Activated T-helper 1 cell treated with anti-CD3 and anti-CD28 coated beads, Interleukin-12 subunit alpha, Interleukin-12 subunit beta, Interleukin-2, Interleukin-4 antibody, amounts not matched to agents 30 ng/mL and 10 ng/mL and 1 ng/mL, durations not matched to agents 14 hours and 24 hours and 36 hours (primary cell): ENCODE measurements at regions of chr5 and their contacts with region 1.

Region 1: GRCh38 chr5:73298772-73299630 is 126.0 kb downstream of the TMEM174 start:
- DNase-seq: no peak
- H3K4me3 Mint-ChIP-seq: no peak overlapping the region
- H3K27ac Mint-ChIP-seq: peak overlapping the region; percentile 42
- H3K4me1 Mint-ChIP-seq: no peaks in the 10 kb centered on the region
- H3K27me3 Mint-ChIP-seq: peaks cover 81% of the 10 kb centered on the region

Region 2: DNA sequence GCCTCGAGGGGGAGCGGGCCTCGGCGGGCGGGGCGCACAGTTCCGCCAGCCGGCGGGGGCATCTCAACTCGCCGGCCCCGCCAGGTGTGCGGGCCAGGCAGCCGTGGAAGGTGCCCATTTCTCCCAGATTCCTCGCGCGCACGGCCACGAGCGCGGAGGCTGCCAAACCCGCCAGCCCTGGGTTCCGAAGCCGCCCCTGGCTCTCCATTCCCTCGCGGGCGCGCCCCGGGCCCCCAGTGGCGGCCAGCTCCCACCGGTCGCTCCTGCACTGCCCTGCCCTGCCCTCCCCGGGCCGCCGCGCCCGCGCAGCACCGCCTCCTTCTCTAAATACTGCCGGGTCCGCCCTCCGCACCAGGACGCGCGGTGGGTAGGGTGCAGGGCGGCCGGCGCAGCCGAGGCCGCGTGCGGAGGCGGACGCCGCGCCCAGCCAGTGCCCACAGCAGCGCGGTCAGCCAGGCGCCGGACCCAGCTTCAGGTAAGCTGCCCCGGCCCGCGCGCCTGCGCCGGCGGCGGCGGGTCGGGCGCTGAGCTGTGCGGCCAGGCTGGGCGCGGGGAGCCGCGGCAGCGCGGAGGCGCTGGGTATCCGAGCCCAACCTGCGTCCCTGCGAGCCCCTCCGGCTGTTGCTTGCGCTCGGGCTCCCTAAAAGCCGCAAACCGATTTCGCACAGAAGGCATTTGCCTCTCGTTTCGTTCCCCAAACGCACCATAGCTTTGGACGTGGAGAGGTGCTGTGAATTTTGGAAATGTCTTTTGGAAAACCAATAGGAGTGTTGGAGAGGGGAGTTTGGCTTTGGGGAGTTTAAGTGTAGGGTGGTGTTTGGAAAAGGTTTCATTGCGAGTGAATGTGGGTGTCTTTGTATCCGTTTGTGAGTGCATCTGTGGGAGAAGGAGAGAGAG is 178.5 kb before region 1 on chr5 and contains the start of gene TMEM171:
- intact Hi-C with region 1: loop called (anchors 5 kb)
- DNase-seq: no peak
- H3K4me3 Mint-ChIP-seq: no peak within 1 kb of the TSS
- H3K27ac Mint-ChIP-seq: no peak within 1 kb of the TSS
- H3K4me1 Mint-ChIP-seq: no peaks in the 10 kb centered on the region
- H3K27me3 Mint-ChIP-seq: peaks cover 61% of the 10 kb centered on the region
- total RNA-seq, gene TMEM171: not detected in 2 replicates

Region 3: DNA sequence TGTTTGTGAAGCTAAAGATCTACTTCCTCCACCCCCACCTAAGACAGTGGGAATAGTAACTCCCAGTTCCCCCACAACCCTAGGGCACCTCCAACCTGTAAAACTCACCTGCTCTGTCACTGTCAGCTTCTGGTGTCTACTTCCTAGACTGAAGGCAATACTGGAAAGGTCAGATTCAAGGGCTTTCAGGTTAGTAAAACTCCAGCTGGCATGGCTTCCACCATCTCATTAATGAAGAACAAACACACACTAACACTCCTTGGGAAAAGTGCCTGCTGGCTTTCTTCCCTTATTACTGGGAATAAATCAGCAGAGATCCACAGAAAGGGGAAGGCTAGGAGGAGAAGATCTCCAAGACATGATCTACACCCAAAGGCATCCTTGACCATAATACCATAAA is 16.1 kb before region 1 on chr5:
- intact Hi-C with region 1: no loop called
- DNase-seq: no peak
- H3K4me3 Mint-ChIP-seq: no peak overlapping the region
- H3K27ac Mint-ChIP-seq: no peak overlapping the region
- H3K4me1 Mint-ChIP-seq: no peaks in the 10 kb centered on the region
- H3K27me3 Mint-ChIP-seq: peaks cover 30% of the 10 kb centered on the region

Region 4: DNA sequence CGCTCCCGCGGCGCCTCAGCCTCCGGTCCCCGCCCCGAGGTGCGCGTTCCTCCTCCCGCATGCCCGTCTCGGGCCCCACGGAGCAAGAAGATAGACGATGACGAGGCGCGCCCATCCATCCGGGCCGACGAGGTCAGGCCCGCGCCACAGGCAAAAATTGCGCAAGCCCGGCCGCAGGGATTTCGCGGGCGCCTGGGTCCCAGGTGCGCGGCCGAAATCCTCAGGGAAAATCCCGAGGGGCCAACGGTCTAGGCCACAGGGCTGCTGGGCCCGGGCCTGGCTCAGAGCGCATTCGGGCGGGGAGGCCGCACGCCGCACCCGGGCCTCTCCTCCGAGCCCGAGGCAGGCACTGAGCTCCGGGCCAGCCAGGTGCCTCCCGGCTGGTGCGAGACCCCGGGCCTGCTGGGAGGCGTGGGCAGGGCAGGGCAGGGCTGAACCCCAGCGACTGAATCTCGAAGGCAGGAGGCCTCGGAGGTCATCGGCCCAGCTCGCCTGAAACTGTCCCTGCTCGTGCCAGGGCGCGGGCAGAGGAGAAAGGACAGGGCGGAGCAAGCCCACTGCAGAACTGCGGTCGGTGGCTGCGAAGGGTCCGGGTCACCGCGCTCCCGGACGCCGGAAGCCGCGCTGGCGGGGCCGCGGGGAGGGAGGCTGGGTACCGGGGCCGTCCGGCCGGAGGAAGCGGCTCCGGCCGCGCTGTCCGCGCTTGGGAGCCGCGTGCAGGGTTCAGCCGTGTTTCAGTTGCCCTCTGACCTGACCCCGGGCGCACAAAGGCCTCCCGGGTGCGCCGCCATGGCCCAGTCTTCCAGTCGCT is 82.8 kb after region 1 on chr5:
- intact Hi-C with region 1: loop called (anchors 2 kb)
- DNase-seq: no peak
- H3K4me3 Mint-ChIP-seq: no peak overlapping the region
- H3K27ac Mint-ChIP-seq: no peak overlapping the region
- H3K4me1 Mint-ChIP-seq: peaks cover 6% of the 10 kb centered on the region
- H3K27me3 Mint-ChIP-seq: peaks cover 66% of the 10 kb centered on the region

Region 5: GRCh38 chr5:73471654-73472053 is 172.7 kb after region 1 on chr5:
- intact Hi-C with region 1: no loop called
- DNase-seq: no peak
- H3K4me3 Mint-ChIP-seq: no peak overlapping the region
- H3K27ac Mint-ChIP-seq: no peak overlapping the region
- H3K4me1 Mint-ChIP-seq: no peaks in the 10 kb centered on the region
- H3K27me3 Mint-ChIP-seq: no peaks in the 10 kb centered on the region